ENCODE measurements at regions of chr10 and their contacts with region 1.

Region 1: DNA sequence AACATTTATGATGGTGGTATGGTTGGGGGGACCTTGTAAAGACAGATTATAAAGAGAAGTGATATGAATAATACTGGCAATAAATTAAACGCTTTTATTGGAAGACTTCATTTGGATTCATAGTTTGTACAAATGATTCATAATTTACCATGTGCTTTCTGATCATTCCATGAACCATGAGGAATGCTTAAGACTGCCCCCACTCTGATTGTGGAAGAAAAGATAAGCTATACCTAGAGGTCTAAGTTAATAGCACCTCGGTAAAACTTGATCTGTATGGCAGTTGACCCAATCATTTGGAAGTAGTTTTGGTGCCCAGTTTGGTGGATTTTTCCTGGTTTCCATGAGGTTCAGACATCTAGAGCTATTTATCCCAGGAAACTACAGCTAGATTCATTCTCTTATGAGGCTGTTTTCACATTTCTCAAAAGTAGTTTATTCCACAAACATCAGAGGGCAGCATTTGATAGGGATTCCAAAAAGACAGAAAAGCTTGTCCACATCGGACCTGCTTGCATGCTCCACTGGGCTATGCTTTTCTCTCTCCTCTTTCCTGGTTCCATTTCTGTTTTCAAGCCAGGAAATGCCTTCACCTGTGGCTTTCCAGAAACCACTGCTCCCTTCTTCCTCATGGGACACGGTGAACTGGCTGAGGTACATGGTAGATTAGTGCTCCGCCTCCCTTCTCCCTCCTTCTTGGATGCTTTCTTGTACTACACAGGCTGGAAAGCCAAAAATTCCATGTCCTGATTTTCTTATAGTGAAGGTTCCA is 29.2 kb downstream of the TFAM start:
- DNase-seq: no peak
- ATAC-seq: peak; percentile 53 to 74
- H3K4me3 ChIP-seq: no peak overlapping the region
- H3K27ac ChIP-seq: no peak overlapping the region
- H3K4me1 ChIP-seq: no peaks in the 10 kb centered on the region
- H3K27me3 ChIP-seq: no peaks in the 10 kb centered on the region
- CTCF ChIP-seq: peak in 3 of 5 experiments; percentile 16 to 21 (median 18)
- POLR2A ChIP-seq: no peak

Region 2: GRCh38 chr10:58152673-58153263 is 261.7 kb before region 1 on chr10:
- in situ Hi-C with region 1: loop called in 1 of 4 experiments (anchors 25 kb)
- intact Hi-C with region 1: no loop called
- DNase-seq: no peak
- ATAC-seq: no peak
- H3K4me3 ChIP-seq: no peak overlapping the region
- H3K27ac ChIP-seq: no peak overlapping the region
- H3K4me1 ChIP-seq: no peaks in the 10 kb centered on the region
- H3K27me3 ChIP-seq: no peaks in the 10 kb centered on the region
- CTCF ChIP-seq: peak in 4 of 5 experiments; percentile 18 to 51 (median 42)
- POLR2A ChIP-seq: no peak

Measured in gastrocnemius medialis (tissue), 4 donors.